ENCODE measurements at regions of chr10 and their contacts with region 1.

Region 1: GRCh38 chr10:5813287-5814109 is at the start of gene GDI2:
- DNase-seq: peak; percentile 95 to 98 (median 97)
- H3K4me3 ChIP-seq: peak within 1 kb of the TSS; percentile 99
- H3K27ac ChIP-seq: peak within 1 kb of the TSS; percentile 75 to 94
- H3K4me1 ChIP-seq: peaks cover 6% of the 10 kb centered on the region
- H3K27me3 ChIP-seq: no peaks in the 10 kb centered on the region
- CTCF ChIP-seq: peak in 2 of 3 donors; percentile 11 to 20
- EP300 ChIP-seq: no peak
- POLR2A ChIP-seq: peak; percentile 74
- total RNA-seq, gene GDI2: 148 to 198 (median 177) TPM

Region 2: GRCh38 chr10:5684318-5684970 is 129.1 kb before region 1 on chr10 and contains the start of gene TASOR2:
- intact Hi-C with region 1: loop called in 1 of 4 experiments (anchors 10 kb)
- DNase-seq: peak; percentile 97 to 99 (median 98)
- H3K4me3 ChIP-seq: peak within 1 kb of the TSS; percentile 96
- H3K27ac ChIP-seq: peak within 1 kb of the TSS; percentile 32 to 83
- H3K4me1 ChIP-seq: peaks cover 2% of the 10 kb centered on the region
- H3K27me3 ChIP-seq: no peaks in the 10 kb centered on the region
- CTCF ChIP-seq: no peak
- EP300 ChIP-seq: no peak
- POLR2A ChIP-seq: peak; percentile 20
- total RNA-seq, gene TASOR2: 60.8 to 91.2 (median 70.0) TPM

Region 3: GRCh38 chr10:5746197-5746596 is 67.3 kb before region 1 on chr10:
- intact Hi-C with region 1: no loop called
- DNase-seq: no peak
- H3K4me3 ChIP-seq: no peak overlapping the region
- H3K27ac ChIP-seq: no peak overlapping the region
- H3K4me1 ChIP-seq: no peaks in the 10 kb centered on the region
- H3K27me3 ChIP-seq: no peaks in the 10 kb centered on the region
- CTCF ChIP-seq: no peak
- EP300 ChIP-seq: no peak
- POLR2A ChIP-seq: no peak

Region 4: GRCh38 chr10:5889624-5890451 is 76.3 kb after region 1 on chr10 and contains the starts of genes ANKRD16 and FBH1:
- intact Hi-C with region 1: loop called in 1 of 4 experiments (anchors 5 kb)
- DNase-seq: peak; percentile 99 to 100 (median 99)
- H3K4me3 ChIP-seq: peak within 1 kb of the TSS; percentile 85
- H3K27ac ChIP-seq: peak within 1 kb of the TSS; percentile 68 to 73
- H3K4me1 ChIP-seq: peaks cover 14% of the 10 kb centered on the region
- H3K27me3 ChIP-seq: no peaks in the 10 kb centered on the region
- CTCF ChIP-seq: no peak
- EP300 ChIP-seq: peak; percentile 37
- POLR2A ChIP-seq: peak; percentile 54
- total RNA-seq, gene ANKRD16: 8.6 to 15.3 (median 10.0) TPM
- total RNA-seq, gene FBH1: 54.6 to 80.3 (median 78.3) TPM

Measured in ovary (tissue), 10 donors.